PC-9 (cell line): ENCODE measurements at regions of chr6 and their contacts with region 1.

Region 1: GRCh38 chr6:42782622-42783176 is 847 bp downstream of the BICRAL start:
- DNase-seq: peak; percentile 60 to 62
- H3K4me3 ChIP-seq: peak overlapping the region; percentile 99
- H3K27ac ChIP-seq: peak overlapping the region; percentile 94
- H3K4me1 ChIP-seq: peaks cover 39% of the 10 kb centered on the region
- H3K27me3 ChIP-seq: no peaks in the 10 kb centered on the region
- CTCF ChIP-seq: no peak

Region 2: GRCh38 chr6:42148058-42148457 is 634.6 kb before region 1 on chr6:
- CTCF ChIA-PET with region 1: no interaction called
- POLR2A ChIA-PET with region 1: interaction called, 18 read pairs
- intact Hi-C with region 1: no loop called
- DNase-seq: peak; percentile 51 to 55
- H3K4me3 ChIP-seq: no peak overlapping the region
- H3K27ac ChIP-seq: no peak overlapping the region
- H3K4me1 ChIP-seq: peaks cover 13% of the 10 kb centered on the region
- H3K27me3 ChIP-seq: no peaks in the 10 kb centered on the region
- CTCF ChIP-seq: no peak

Region 3: DNA sequence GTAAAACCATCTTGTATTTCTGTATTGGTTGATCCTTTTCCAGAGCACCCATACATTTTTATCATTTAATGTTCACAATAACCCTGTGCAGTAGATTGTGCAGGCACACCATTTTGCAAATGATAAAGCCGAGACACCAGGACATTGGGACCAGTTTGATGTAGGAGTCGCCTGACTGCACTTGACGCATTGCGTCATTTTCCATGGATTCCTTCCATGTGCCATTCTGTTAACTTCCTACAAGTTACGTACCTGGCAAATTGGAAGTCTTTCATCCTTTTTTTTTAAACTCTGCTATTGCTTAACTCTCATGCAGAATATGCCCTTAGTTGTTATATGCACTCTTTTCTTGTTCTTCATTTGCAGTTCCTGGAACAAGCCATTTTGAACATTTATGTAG is 103.3 kb before region 1 on chr6:
- CTCF ChIA-PET with region 1: no interaction called
- POLR2A ChIA-PET with region 1: no interaction called
- intact Hi-C with region 1: no loop called
- DNase-seq: no peak
- H3K4me3 ChIP-seq: no peak overlapping the region
- H3K27ac ChIP-seq: no peak overlapping the region
- H3K4me1 ChIP-seq: no peaks in the 10 kb centered on the region
- H3K27me3 ChIP-seq: no peaks in the 10 kb centered on the region
- CTCF ChIP-seq: no peak

Region 4: DNA sequence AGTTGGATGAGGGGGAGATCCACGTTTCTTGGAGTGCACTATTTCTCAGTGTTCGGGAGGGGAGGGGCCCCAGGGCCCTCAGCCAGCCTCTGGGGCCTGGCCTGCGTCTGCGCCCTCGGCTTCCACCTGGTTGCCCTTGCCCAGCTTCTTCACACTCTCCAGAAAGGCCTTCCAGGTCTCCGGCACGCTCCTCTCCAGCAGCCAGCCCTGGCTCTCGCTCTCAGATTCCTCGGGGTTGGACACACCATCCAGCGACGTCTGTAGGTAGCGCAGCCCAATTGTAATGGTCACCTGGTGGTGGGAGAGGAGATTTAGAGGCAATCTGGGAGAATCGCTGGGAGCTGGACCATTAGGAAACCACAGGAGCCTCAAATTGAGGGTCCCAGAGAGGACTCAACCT is 84.5 kb before region 1 on chr6:
- CTCF ChIA-PET with region 1: no interaction called
- POLR2A ChIA-PET with region 1: interaction called, 23 read pairs
- intact Hi-C with region 1: no loop called
- DNase-seq: no peak
- H3K4me3 ChIP-seq: no peak overlapping the region
- H3K27ac ChIP-seq: no peak overlapping the region
- H3K4me1 ChIP-seq: no peaks in the 10 kb centered on the region
- H3K27me3 ChIP-seq: no peaks in the 10 kb centered on the region
- CTCF ChIP-seq: no peak